Posterior vena cava (tissue), 2 donors: ENCODE measurements at regions of chr1 and their contacts with region 1.

Region 1: GRCh38 chr1:226827968-226828513 is 42.4 kb upstream of the PSEN2 start:
- DNase-seq: peak; percentile 99

Region 2: DNA sequence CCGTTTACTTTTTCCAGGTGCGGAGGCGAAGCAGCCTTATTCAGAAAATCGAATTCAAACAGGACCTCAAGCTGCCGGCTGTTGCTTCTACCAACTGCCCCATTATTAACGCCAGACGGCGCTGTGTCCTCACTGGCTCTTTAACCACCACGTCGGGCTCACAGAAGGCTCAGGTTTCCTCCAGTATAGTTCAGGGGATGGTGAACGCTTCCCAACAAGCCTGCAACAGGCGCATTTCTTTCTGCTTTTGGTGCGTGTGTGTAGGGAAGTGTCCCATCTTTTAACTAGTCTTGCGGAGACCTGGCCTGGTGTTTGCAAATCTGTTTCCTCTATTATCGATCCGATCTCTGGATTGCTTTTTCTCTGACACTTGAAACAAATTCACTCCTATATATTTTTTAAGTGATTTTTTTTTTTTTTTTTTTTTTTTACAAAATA is 280.3 kb before region 1 on chr1:
- intact Hi-C with region 1: loop called in 1 of 2 experiments (anchors 10 kb)
- DNase-seq: peak; percentile 93

Region 3: DNA sequence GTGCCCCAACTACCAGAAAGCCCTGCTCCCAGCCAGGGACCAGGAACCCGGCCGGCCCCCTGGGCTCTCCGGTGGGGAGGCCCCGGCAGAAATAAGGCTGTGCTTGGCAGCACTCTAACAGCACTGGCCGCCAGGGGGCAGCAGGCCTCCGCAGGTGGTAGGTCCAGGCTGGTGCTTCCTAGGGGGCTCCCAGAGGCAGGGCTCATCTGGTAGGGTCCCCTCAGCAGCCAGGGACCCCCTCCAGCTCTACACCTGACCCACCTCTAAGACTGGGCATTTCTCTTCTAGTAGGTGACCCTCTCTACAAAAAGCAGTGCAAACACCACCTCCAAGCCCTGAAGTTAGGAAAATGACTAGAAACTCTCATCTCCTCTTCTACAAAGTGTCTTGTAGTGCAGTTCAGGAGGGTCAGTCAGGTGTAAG is 193.9 kb before region 1 on chr1:
- intact Hi-C with region 1: loop called (anchors 2 to 5 kb)
- DNase-seq: peak; percentile 94

Region 4: GRCh38 chr1:226736908-226737818 is 90.9 kb before region 1 on chr1:
- intact Hi-C with region 1: loop called in 1 of 2 experiments (anchors 5 kb)
- DNase-seq: peak; percentile 86